Posterior vena cava (tissue), 2 donors: ENCODE measurements at regions of chr6 and their contacts with region 1.

Region 1: DNA sequence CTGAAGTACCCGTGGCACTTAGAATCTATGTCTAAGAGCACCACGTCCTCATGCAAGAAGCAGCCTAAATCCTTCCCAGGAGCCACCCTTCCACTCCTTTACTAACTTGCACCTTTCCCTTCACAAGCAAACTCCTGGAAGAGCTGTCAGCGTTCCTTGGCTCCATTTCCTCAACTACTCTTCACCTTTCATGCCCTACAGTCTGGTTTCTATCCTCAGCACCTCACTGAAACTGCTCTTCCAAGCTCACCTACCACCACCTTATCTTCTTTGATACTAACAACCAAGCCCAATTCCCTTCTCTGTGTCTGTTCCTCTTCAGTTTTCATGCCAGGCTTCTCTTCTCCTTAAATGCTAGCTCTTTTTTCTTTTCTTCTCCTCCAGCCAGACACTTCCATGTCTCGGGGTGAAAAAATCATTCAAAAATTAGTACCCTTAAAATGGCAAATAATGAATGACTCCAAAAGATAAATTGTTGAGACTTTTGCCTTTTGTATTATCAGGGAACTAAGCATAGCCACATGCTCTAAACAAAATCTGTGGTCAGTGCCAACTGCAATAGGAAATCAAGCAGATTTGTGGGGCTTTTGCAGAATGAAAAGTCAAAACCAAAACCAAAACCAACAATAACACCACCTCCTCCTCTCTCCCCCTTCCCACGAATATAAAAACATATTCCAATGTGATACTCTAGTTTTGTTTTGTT is 149.6 kb upstream of the KCNK16 start:
- DNase-seq: no peak

Region 2: GRCh38 chr6:39451831-39452230 is 20.3 kb before region 1 on chr6:
- intact Hi-C with region 1: loop called in 1 of 2 experiments (anchors 1 kb)
- DNase-seq: no peak

Region 3: GRCh38 chr6:40499215-40499614 is 1027.1 kb after region 1 on chr6:
- intact Hi-C with region 1: no loop called
- DNase-seq: no peak